ENCODE measurements at regions of chr6 and their contacts with region 1.

Region 1: DNA sequence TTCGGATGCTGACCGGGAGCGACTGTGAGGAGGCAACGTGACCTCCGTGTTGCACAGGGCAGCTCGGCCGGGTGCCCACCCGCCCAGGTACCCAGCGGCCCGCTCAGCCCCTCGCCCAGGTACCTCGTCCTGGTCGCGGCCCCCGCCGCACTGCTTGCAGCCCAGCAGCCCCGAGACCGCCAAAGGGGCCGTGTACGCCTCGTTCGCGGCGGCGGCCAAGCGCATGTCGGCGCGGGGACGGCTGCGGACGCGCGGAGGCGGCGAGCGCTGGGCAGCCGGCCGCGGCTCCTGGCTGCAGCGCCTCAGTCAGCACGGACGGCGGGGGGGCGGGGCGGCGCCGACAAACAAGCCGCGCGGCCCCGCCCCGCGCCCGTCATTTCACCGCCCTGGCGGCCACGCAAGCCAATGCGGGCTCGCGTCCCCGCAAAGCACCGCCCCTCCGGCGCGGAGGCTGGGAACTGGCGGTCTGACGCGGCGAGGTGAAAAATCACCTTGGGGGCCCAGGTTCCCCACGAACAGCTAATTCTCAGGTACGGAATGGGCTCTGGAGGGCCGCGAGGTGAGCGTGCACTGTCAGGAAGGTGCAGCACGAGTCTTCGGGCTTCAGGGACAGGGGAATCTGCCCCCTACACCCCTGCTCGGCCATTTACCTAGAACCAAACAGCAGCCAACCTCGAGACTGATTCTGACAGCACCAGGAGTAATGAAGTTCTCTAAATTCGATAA is 85.2 kb downstream of the SESN1 start:
- DNase-seq: peak; percentile 92 to 93
- H3K4me3 ChIP-seq: peak overlapping the region; percentile 60 to 76
- H3K27ac ChIP-seq: peak overlapping the region; percentile 96 to 97
- H3K4me1 ChIP-seq: peaks cover 0 to 2% of the 10 kb centered on the region in 2 donors
- H3K27me3 ChIP-seq: no peaks in the 10 kb centered on the region
- CTCF ChIP-seq: peak in 3 of 4 experiments; percentile 48 to 80 (median 49)
- POLR2A ChIP-seq: peak; percentile 98 to 99

Region 2: GRCh38 chr6:108958900-108959770 is 50.3 kb before region 1 on chr6:
- intact Hi-C with region 1: loop called (anchors 10 kb)
- DNase-seq: no peak
- H3K4me3 ChIP-seq: no peak overlapping the region
- H3K27ac ChIP-seq: no peak overlapping the region
- H3K4me1 ChIP-seq: no peaks in the 10 kb centered on the region
- H3K27me3 ChIP-seq: no peaks in the 10 kb centered on the region
- CTCF ChIP-seq: no peak
- POLR2A ChIP-seq: no peak

Region 3: GRCh38 chr6:109024784-109025183 is 15.4 kb after region 1 on chr6:
- intact Hi-C with region 1: no loop called
- DNase-seq: no peak
- H3K4me3 ChIP-seq: no peak overlapping the region
- H3K27ac ChIP-seq: no peak overlapping the region
- H3K4me1 ChIP-seq: no peaks in the 10 kb centered on the region
- H3K27me3 ChIP-seq: no peaks in the 10 kb centered on the region
- CTCF ChIP-seq: peak in 1 of 4 experiments; percentile 8
- POLR2A ChIP-seq: no peak

Region 4: GRCh38 chr6:109069746-109070145 is 60.3 kb after region 1 on chr6:
- intact Hi-C with region 1: no loop called
- DNase-seq: no peak
- H3K4me3 ChIP-seq: no peak overlapping the region
- H3K27ac ChIP-seq: no peak overlapping the region
- H3K4me1 ChIP-seq: no peaks in the 10 kb centered on the region
- H3K27me3 ChIP-seq: no peaks in the 10 kb centered on the region
- CTCF ChIP-seq: no peak
- POLR2A ChIP-seq: no peak

Measured in uterus (tissue), 4 donors.